AG04449 (cell line): ENCODE measurements at regions of chr15 and their contacts with region 1.

Region 1: GRCh38 chr15:65384895-65385858 is 7.4 kb upstream of the IGDCC3 start:
- DNase-seq: peak; percentile 9
- H3K4me3 ChIP-seq: no peak overlapping the region
- CTCF ChIP-seq: peak; percentile 83

Region 2: GRCh38 chr15:64825431-64826294 is 559.5 kb before region 1 on chr15 and contains the start of gene PIF1:
- CTCF ChIA-PET with region 1: no interaction called
- POLR2A ChIA-PET with region 1: no interaction called
- DNase-seq: peak; percentile 93
- H3K4me3 ChIP-seq: peak within 1 kb of the TSS; percentile 68
- CTCF ChIP-seq: no peak

Region 3: GRCh38 chr15:65275728-65276126 is 109.5 kb before region 1 on chr15:
- CTCF ChIA-PET with region 1: no interaction called
- POLR2A ChIA-PET with region 1: no interaction called
- DNase-seq: no peak
- H3K4me3 ChIP-seq: no peak overlapping the region
- CTCF ChIP-seq: no peak

Region 4: GRCh38 chr15:65326117-65326526 is 59.1 kb before region 1 on chr15:
- CTCF ChIA-PET with region 1: interaction called, 652 read pairs
- POLR2A ChIA-PET with region 1: no interaction called
- DNase-seq: no peak
- H3K4me3 ChIP-seq: no peak overlapping the region
- CTCF ChIP-seq: no peak

Region 5: DNA sequence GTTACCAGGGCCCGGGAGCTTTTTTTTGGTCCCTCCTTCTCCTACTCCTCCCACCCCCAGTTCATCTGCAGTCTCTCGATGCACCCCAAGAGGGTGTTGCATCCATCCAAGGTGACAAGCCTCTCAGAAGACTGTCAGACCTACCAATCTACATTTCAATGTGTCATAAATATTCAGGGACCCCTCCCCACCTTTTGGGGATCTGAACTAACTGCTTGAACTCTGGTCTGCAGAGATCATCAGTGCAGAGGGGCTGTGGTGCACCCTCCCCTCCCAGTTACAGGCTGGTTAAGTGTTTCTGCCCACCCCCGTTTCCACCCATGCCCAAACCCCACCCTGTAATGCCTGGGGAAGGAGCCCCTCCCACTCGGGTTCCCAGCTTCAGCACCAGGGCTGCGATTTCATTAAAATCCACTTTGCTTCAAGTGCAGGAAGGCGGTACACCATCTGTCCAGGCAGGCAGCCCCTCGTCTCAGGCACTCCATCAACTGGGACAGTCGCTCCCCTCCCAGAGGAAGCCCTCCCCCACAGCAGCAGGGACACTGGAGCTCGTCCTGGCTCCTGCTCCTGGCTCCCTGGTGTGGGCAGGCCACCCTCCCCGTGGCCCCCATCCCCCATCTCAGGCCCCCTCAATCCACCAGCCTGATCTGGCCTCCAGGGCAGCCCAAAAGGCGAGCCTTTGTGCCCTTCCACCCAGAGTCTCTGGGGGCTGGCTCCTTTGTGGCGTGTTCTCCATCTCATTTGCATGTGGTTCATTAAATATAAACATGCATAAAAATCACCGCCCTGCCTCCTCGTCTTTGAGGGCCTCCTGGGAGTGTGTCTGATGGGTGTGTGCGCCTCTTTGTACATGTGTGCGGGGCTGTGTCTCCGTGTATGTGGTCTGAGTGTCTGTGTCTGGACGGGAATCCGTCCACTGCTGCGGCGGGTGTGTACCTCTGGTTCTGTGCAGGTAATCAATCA is 48.4 kb before region 1 on chr15:
- CTCF ChIA-PET with region 1: interaction called, 12 read pairs
- POLR2A ChIA-PET with region 1: no interaction called
- DNase-seq: no peak
- H3K4me3 ChIP-seq: no peak overlapping the region
- CTCF ChIP-seq: no peak

Region 6: GRCh38 chr15:65368302-65369211 is 16.6 kb before region 1 on chr15:
- CTCF ChIA-PET with region 1: interaction called, 93 read pairs
- POLR2A ChIA-PET with region 1: no interaction called
- DNase-seq: no peak
- H3K4me3 ChIP-seq: no peak overlapping the region
- CTCF ChIP-seq: no peak

Region 7: DNA sequence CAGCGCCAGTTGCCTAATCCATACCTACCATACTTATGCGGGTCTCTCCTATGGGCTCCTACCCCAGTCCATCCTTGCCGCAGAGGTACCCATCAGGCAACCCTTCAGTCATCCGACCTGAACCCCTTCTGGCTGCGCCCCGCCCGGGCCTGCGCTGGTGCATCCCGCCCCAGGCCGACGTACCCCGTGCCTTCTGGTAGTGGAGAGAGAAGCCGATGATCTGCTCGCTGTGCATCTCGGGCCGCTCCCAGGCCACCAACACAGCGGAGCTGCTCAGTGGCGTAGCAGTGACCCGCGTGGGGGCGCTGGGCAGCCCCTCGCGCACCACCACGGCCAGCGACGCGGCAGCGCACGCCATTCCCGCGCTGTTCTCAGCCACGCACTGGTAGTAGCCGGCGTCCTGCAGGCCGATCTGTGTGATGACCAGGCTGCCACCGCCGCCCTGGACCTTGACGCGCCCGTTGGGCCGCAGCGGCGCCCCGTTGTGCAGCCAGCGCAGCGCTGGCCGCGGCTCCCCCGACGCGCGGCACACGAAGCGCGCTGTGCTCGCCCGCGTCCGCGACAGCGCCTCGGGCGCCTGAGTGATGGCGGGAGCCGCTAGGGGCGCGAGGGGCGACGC is 10.5 kb after region 1 on chr15:
- CTCF ChIA-PET with region 1: interaction called, 267 read pairs
- POLR2A ChIA-PET with region 1: no interaction called
- DNase-seq: no peak
- H3K4me3 ChIP-seq: no peak overlapping the region
- CTCF ChIP-seq: no peak